MCF 10A (cell line): ENCODE measurements at regions of chr12 and their contacts with region 1.

Region 1: GRCh38 chr12:68610370-68611093 is at the start of gene RAP1B:
- DNase-seq: peak; percentile 91
- H3K4me3 Mint-ChIP-seq: peak within 1 kb of the TSS; percentile 87
- H3K27ac Mint-ChIP-seq: peak within 1 kb of the TSS; percentile 96
- H3K4me1 Mint-ChIP-seq: peaks cover 28% of the 10 kb centered on the region
- H3K27me3 Mint-ChIP-seq: no peaks in the 10 kb centered on the region
- CTCF ChIP-seq: no peak
- total RNA-seq, gene RAP1B: 180 and 232 TPM in 2 replicates

Region 2: DNA sequence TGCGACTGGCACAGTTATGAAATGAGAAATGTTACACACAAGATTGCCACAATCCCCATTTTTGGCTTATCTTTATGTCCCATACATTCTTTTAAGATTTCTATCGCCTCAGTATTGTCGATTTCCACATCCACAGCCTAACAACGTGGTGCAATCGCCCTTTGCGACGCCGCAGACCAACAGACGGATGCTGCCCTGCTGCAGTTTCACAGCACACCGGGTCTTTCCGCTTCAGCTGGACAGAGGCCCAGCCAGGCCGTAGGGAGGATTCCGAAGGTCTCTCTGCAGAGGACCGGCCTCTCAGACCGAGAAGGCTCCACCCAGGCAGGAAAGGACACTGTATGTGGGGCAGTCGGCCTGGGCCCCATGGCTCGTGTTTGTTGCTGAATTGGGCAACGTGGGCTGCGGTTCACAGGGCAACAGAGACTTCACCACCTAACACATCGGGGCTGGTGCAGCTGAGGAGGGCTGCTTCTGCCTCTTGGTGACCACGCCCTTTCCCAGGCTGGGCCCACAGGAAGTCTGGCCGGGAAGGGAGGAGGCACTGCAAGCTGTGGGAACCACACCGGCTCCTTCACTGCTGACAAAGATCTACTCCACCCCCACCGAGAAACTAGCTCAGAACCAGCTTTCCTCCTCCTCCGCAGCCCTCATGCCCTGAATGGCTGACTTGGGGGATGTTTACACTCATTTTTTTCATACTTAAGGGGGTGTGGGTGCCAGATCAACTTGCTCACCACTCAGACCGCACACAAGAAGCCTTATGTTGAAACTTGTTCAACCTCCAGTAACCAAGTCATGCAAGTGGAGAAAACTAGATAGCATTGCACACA is 245.4 kb before region 1 on chr12:
- CTCF ChIA-PET with region 1: no interaction called
- POLR2A ChIA-PET with region 1: interaction called, 13 read pairs
- intact Hi-C with region 1: loop called (anchors 2 kb)
- DNase-seq: peak; percentile 98
- H3K4me3 Mint-ChIP-seq: peak overlapping the region; percentile 75
- H3K27ac Mint-ChIP-seq: peak overlapping the region; percentile 97
- H3K4me1 Mint-ChIP-seq: peaks cover 29% of the 10 kb centered on the region
- H3K27me3 Mint-ChIP-seq: no peaks in the 10 kb centered on the region
- CTCF ChIP-seq: no peak

Region 3: GRCh38 chr12:68510397-68510796 is 100.1 kb before region 1 on chr12:
- CTCF ChIA-PET with region 1: interaction called, 3 read pairs
- POLR2A ChIA-PET with region 1: interaction called, 12 read pairs
- intact Hi-C with region 1: no loop called
- DNase-seq: peak; percentile 27
- H3K4me3 Mint-ChIP-seq: no peak overlapping the region
- H3K27ac Mint-ChIP-seq: peak overlapping the region; percentile 28
- H3K4me1 Mint-ChIP-seq: peaks cover 17% of the 10 kb centered on the region
- H3K27me3 Mint-ChIP-seq: no peaks in the 10 kb centered on the region
- CTCF ChIP-seq: no peak

Region 4: DNA sequence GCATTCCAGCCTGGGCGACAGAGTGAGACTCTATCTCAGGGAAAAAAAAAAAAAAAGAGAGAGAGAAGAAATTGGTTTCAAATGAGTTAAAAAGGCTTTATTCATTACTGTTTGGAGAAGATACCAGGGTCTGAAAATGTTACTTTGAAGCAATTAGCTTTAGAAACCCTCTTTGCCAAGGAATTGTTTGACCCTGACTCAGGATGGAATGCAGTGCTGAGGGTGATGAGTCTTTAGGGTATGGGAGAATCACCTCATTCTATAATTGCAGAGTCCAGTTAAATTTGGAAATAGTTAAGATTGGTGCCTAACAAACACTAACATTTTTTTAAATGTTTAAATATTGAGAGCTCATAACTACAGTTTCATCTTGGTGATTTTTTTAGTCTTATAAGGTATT is 13.5 kb after region 1 on chr12:
- CTCF ChIA-PET with region 1: interaction called, 4 read pairs
- POLR2A ChIA-PET with region 1: interaction called, 52 read pairs
- intact Hi-C with region 1: no loop called
- DNase-seq: no peak
- H3K4me3 Mint-ChIP-seq: no peak overlapping the region
- H3K27ac Mint-ChIP-seq: no peak overlapping the region
- H3K4me1 Mint-ChIP-seq: peaks cover 34% of the 10 kb centered on the region
- H3K27me3 Mint-ChIP-seq: no peaks in the 10 kb centered on the region
- CTCF ChIP-seq: no peak

Region 5: GRCh38 chr12:68686595-68687521 is 76.3 kb after region 1 on chr12 and contains the start of gene NUP107:
- CTCF ChIA-PET with region 1: no interaction called
- POLR2A ChIA-PET with region 1: interaction called, 5 read pairs
- intact Hi-C with region 1: loop called (anchors 2 kb)
- DNase-seq: peak; percentile 99
- H3K4me3 Mint-ChIP-seq: peak within 1 kb of the TSS; percentile 91
- H3K27ac Mint-ChIP-seq: peak within 1 kb of the TSS; percentile 97
- H3K4me1 Mint-ChIP-seq: peaks cover 14% of the 10 kb centered on the region
- H3K27me3 Mint-ChIP-seq: no peaks in the 10 kb centered on the region
- CTCF ChIP-seq: no peak
- total RNA-seq, gene NUP107: 48.1 and 54.5 TPM in 2 replicates